Activated CD4-positive, alpha-beta T cell treated with anti-CD3 and anti-CD28 coated beads, Interleukin-2, amount 10 ng/mL, durations not matched to agents 24 days and 14 days (primary cell): ENCODE measurements at regions of chr4 and their contacts with region 1.

Region 1: DNA sequence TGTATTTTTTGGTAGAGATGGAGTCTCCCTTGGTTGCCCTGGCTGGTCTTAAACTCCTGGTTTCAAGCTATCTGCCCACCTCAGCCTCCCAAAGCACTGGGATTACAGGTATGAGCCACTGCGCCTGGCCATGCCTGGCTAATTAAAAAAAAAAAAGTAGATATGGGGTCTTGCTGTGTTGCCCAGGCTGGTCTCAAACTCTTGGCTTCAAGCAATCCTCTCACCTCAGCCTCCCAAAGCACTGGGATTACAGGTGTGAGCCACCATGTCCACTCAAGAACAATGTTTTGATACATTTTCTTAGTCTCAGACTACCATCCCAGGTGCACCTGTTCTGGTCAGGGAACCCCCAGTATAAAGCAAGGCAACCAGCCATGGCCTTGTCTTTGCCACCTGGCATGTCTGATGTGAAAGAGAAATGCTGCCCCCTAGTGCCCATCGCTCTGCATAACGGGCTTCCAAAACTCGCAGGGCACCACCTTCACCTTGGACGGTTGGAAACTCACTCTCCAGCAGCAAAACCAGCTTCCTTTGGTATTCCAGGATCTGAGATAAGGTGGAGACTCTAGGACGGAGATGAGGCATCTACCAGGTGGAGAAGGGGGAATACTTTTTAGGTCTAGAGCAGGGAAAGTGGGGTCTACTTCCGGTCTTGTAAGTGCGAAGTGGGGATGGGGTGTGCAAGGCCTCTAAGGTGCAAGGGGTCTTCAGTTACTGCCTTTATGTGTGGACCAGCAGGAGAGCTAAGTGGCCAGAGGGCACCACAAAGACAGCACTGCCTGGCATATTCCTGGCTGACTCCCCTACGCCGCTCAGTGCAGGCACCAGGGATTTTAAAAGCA is 47.7 kb upstream of the AFAP1 start:
- DNase-seq: peak; percentile 93
- H3K4me3 Mint-ChIP-seq: no peak overlapping the region
- H3K27ac Mint-ChIP-seq: no peak overlapping the region
- H3K4me1 Mint-ChIP-seq: peaks cover 4% of the 10 kb centered on the region
- H3K27me3 Mint-ChIP-seq: peaks cover 1% of the 10 kb centered on the region

Region 2: GRCh38 chr4:7500404-7500803 is 487.0 kb before region 1 on chr4:
- intact Hi-C with region 1: no loop called
- DNase-seq: no peak
- H3K4me3 Mint-ChIP-seq: no peak overlapping the region
- H3K27ac Mint-ChIP-seq: no peak overlapping the region
- H3K4me1 Mint-ChIP-seq: no peaks in the 10 kb centered on the region
- H3K27me3 Mint-ChIP-seq: peaks cover 2% of the 10 kb centered on the region

Region 3: DNA sequence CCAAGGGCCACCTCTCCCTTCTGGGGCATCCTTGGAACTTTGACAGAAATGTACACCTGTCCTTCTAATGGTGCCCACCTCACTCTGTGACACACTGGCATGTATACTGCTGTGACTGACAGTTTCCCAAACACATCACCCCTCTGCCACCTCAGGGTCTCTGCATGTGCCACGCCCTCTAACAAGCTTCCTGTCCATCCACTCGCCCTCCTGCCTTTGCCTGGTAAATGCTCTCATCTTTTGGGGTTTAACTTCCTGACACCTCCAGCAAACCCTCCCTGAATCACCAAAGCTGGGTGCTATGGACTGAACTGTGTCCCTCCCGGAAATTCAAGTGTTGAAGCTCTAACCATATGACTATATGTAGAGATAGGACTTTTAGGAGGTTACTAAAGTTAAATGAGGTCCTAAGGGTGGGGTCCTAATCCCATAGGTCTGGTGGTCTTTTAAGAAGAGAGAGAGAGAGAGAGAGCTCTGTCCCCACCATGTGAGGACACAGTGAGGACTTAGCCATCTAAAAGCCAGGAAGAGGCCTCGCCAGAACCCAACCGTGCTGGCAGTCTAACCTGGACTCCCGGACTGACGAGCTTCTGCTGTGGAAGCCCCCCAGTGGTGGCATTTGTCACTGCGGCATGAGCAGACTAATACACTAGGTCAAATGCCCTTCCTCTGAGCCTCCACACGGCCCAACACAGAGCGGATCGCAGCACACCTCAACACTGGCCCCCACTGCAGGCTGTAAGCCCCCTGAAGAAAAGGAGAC is 143.4 kb before region 1 on chr4:
- intact Hi-C with region 1: loop called (anchors 1 kb)
- DNase-seq: peak; percentile 90
- H3K4me3 Mint-ChIP-seq: no peak overlapping the region
- H3K27ac Mint-ChIP-seq: no peak overlapping the region
- H3K4me1 Mint-ChIP-seq: peaks cover 17% of the 10 kb centered on the region
- H3K27me3 Mint-ChIP-seq: no peaks in the 10 kb centered on the region